ENCODE measurements at regions of chr3 and their contacts with region 1.

Region 1: DNA sequence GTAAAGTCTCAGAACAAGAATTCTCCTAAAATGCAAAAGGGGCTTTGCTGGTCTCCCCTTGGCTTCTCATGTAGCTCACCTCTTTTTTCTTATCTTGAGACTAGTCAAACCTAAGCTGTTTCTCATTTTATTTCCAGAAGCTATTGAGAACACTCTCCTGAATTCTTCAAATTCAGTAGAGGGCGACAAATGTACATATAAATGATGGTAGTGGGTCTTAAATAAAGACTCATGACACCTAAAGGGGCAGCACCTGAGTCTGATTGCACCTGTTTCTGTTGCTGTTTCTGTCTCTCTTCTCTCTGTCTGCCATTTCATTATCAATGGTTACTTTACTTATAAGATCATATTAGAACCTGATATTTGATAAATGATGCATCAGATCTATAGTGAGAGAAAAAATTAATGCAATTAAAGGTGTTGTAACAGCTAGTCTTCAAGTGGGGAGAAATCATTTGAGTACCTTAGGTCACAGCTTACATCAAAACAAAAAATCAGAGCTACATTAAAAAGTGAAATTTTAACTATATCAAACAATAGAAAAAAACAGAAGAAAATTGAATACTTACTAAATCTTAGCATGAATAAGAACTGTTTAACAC is 7.0 kb downstream of the ADIPOQ start:
- DNase-seq: peak in 4 of 5 donors; percentile 63 to 70 (median 66)
- H3K4me3 ChIP-seq: no peak overlapping the region
- H3K4me3 Mint-ChIP-seq: no peak overlapping the region
- H3K27ac ChIP-seq: no peak overlapping the region
- H3K27ac Mint-ChIP-seq: peak overlapping the region in 5 of 7 donors; percentile 1 to 84 (median 67)
- H3K4me1 ChIP-seq: peaks cover 9% of the 10 kb centered on the region
- H3K4me1 Mint-ChIP-seq: peaks cover 8 to 19% (median 14%) of the 10 kb centered on the region in 4 donors
- H3K27me3 ChIP-seq: peaks cover 4% of the 10 kb centered on the region
- H3K27me3 Mint-ChIP-seq: peaks cover 3 to 9% of the 10 kb centered on the region in 2 donors

Region 2: DNA sequence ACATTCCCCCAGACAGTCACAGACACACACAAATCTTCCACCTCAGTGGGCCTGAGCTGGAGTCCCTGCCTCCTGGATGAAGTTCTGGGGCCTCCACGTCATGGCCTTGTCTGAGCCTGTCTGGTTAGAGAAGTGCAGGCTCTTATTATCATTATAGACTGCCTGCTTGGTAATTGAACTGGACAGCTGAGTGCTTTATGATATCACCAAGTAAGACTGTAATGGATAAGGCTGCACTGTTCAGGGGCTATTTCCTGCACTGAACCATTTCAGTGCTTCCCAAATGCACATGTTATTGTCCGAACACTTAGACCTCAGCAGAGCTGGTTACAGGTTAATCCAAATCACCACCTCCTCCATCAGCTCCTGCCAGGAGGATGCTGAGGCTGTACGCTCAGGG is 72.1 kb after region 1 on chr3:
- CTCF ChIA-PET with region 1: interaction called, 24 read pairs
- POLR2A ChIA-PET with region 1: interaction called, 4 read pairs
- intact Hi-C with region 1: no loop called
- DNase-seq: no peak
- H3K4me3 ChIP-seq: no peak overlapping the region
- H3K4me3 Mint-ChIP-seq: no peak overlapping the region
- H3K27ac ChIP-seq: no peak overlapping the region
- H3K27ac Mint-ChIP-seq: no peak overlapping the region
- H3K4me1 ChIP-seq: peaks cover 11% of the 10 kb centered on the region
- H3K4me1 Mint-ChIP-seq: peaks cover 6 to 21% (median 8%) of the 10 kb centered on the region in 4 donors
- H3K27me3 ChIP-seq: no peaks in the 10 kb centered on the region
- H3K27me3 Mint-ChIP-seq: no peaks in the 10 kb centered on the region

Region 3: GRCh38 chr3:186976837-186977750 is 127.6 kb after region 1 on chr3:
- CTCF ChIA-PET with region 1: interaction called, 13 read pairs
- POLR2A ChIA-PET with region 1: no interaction called
- intact Hi-C with region 1: no loop called
- DNase-seq: no peak
- H3K4me3 ChIP-seq: no peak overlapping the region
- H3K4me3 Mint-ChIP-seq: no peak overlapping the region
- H3K27ac ChIP-seq: no peak overlapping the region
- H3K27ac Mint-ChIP-seq: peak overlapping the region in 4 of 7 donors; percentile 2 to 77 (median 40)
- H3K4me1 ChIP-seq: no peaks in the 10 kb centered on the region
- H3K4me1 Mint-ChIP-seq: peaks cover 21 to 40% (median 23%) of the 10 kb centered on the region in 4 donors
- H3K27me3 ChIP-seq: no peaks in the 10 kb centered on the region
- H3K27me3 Mint-ChIP-seq: no peaks in the 10 kb centered on the region

Region 4: DNA sequence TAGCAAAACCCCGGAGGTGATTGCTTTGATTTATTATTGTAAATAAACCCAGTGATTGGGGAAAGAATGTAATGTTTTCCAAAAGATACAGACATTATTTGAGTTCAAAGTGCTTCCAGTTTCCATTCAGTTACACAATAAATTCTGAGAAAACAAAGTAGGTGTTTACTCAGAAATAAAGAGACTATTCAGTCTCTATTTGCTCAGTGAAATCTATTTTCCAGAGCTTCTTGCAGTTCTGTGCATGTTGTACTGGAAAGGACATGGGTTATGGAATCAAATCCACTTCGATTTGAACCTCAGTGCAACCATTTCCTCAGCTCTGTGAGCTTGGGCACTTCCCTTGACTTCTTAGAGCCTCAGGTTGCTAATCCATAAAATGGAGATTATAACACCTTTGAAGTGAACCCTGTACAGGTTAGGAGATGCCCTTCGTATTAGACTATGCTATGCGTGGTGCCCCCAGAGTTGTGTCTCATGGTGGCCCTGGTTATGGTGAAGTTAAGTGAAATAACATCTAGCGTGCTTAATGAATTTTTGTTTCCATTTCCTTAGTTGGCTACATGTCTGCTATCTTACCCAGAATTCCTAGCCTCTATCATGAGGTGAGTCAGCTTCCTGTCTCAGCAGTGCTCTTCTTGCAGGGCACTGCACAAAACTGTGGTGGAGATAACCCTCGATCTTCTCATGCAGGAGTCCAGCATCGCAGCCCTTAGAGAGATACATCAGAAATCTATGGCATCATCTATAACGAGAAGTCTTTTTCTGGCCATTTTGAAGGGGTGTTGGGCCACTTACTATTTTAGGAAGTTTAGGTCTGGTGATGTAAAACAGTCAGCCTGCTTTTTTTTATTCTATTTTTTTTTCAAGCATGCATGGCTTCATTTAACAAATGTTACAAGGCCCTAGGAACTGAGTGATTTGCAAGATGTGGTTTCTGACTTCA is 192.2 kb after region 1 on chr3:
- CTCF ChIA-PET with region 1: interaction called, 10 read pairs
- POLR2A ChIA-PET with region 1: interaction called, 3 read pairs
- intact Hi-C with region 1: no loop called
- DNase-seq: peak; percentile 55 to 87 (median 65)
- H3K4me3 ChIP-seq: peak overlapping the region in 1 of 2 donors; percentile 17
- H3K4me3 Mint-ChIP-seq: peak overlapping the region; percentile 60 to 82 (median 72)
- H3K27ac ChIP-seq: peak overlapping the region; percentile 59
- H3K27ac Mint-ChIP-seq: peak overlapping the region; percentile 90 to 97 (median 94)
- H3K4me1 ChIP-seq: peaks cover 87% of the 10 kb centered on the region
- H3K4me1 Mint-ChIP-seq: peaks cover 65 to 85% (median 79%) of the 10 kb centered on the region in 4 donors
- H3K27me3 ChIP-seq: no peaks in the 10 kb centered on the region
- H3K27me3 Mint-ChIP-seq: no peaks in the 10 kb centered on the region

Region 5: GRCh38 chr3:187112934-187113793 is 263.7 kb after region 1 on chr3:
- CTCF ChIA-PET with region 1: interaction called, 69 read pairs
- POLR2A ChIA-PET with region 1: interaction called, 9 read pairs
- intact Hi-C with region 1: loop called (anchors 1 kb)
- DNase-seq: peak in 4 of 5 donors; percentile 45 to 54 (median 52)
- H3K4me3 ChIP-seq: no peak overlapping the region
- H3K4me3 Mint-ChIP-seq: no peak overlapping the region
- H3K27ac ChIP-seq: no peak overlapping the region
- H3K27ac Mint-ChIP-seq: no peak overlapping the region
- H3K4me1 ChIP-seq: peaks cover 4% of the 10 kb centered on the region
- H3K4me1 Mint-ChIP-seq: peaks cover 5 to 7% (median 6%) of the 10 kb centered on the region in 4 donors
- H3K27me3 ChIP-seq: no peaks in the 10 kb centered on the region
- H3K27me3 Mint-ChIP-seq: no peaks in the 10 kb centered on the region

Region 6: GRCh38 chr3:187164885-187165543 is 315.5 kb after region 1 on chr3:
- CTCF ChIA-PET with region 1: interaction called, 79 read pairs
- POLR2A ChIA-PET with region 1: interaction called, 4 read pairs
- intact Hi-C with region 1: loop called (anchors 1 kb)
- DNase-seq: peak; percentile 66 to 73 (median 70)
- H3K4me3 ChIP-seq: no peak overlapping the region
- H3K4me3 Mint-ChIP-seq: no peak overlapping the region
- H3K27ac ChIP-seq: no peak overlapping the region
- H3K27ac Mint-ChIP-seq: no peak overlapping the region
- H3K4me1 ChIP-seq: peaks cover 2% of the 10 kb centered on the region
- H3K4me1 Mint-ChIP-seq: peaks cover 0 to 8% (median 4%) of the 10 kb centered on the region in 4 donors
- H3K27me3 ChIP-seq: no peaks in the 10 kb centered on the region
- H3K27me3 Mint-ChIP-seq: peaks cover 6 to 7% of the 10 kb centered on the region in 2 donors

Measured in CD4-positive, alpha-beta memory T cell (primary cell).